ENCODE measurements at regions of chr17 and their contacts with region 1.

Region 1: GRCh38 chr17:75034236-75034908 is 12.4 kb downstream of the ATP5PD start:
- DNase-seq: peak; percentile 93
- ATAC-seq: peak; percentile 67
- H3K4me3 Mint-ChIP-seq: peak overlapping the region; percentile 93
- H3K27ac Mint-ChIP-seq: peak overlapping the region; percentile 95
- H3K4me1 Mint-ChIP-seq: peaks cover 52% of the 10 kb centered on the region
- H3K27me3 Mint-ChIP-seq: peaks cover 2% of the 10 kb centered on the region

Region 2: DNA sequence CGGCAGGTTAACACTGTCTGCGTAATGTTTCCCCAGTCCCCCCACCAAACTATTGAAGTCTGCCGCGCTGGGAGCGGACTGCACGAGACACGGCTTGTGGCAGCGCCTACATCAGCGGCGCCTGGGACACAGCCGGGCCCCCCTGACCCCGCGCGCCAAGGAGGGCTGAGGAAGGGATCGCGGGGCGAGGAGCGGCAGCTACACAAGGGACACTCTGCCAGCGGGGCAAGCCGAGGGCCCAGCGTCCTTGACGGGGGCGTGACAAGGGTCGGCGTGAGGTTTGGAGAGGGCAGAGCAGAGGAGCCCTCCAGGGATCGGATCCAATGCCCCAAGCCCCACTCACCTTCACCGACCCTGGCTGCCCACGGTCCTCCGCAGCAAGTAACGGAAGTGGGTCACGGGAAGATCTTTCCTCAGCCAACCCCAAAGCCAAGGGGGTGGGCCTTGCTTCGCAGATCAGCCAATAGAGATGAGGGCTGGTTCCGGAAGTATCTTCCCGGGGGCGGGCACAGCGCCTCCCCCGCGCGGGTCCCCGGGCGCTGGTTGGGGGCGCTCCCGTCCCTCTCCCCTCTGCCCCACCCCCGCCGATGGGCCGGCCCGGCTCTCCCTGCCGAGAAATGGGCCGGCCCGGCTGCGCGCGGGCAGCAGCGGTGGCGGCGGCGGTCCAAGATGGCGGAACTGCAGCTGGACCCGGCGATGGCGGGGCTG is 12.4 kb after region 1 on chr17 and contains the starts of genes ATP5PD and KCTD2:
- CTCF ChIA-PET with region 1: interaction called, 3 read pairs
- POLR2A ChIA-PET with region 1: interaction called, 12 read pairs
- DNase-seq: peak; percentile 97
- ATAC-seq: peak; percentile 96
- H3K4me3 Mint-ChIP-seq: peak within 1 kb of the TSS; percentile 98
- H3K27ac Mint-ChIP-seq: peak within 1 kb of the TSS; percentile 91
- H3K4me1 Mint-ChIP-seq: peaks cover 43% of the 10 kb centered on the region
- H3K27me3 Mint-ChIP-seq: no peaks in the 10 kb centered on the region
- total RNA-seq, gene ATP5PD: 232 to 238 TPM
- total RNA-seq, gene KCTD2: 15.6 to 19.4 TPM